ENCODE measurements at regions of chr19 and their contacts with region 1.

Region 1: DNA sequence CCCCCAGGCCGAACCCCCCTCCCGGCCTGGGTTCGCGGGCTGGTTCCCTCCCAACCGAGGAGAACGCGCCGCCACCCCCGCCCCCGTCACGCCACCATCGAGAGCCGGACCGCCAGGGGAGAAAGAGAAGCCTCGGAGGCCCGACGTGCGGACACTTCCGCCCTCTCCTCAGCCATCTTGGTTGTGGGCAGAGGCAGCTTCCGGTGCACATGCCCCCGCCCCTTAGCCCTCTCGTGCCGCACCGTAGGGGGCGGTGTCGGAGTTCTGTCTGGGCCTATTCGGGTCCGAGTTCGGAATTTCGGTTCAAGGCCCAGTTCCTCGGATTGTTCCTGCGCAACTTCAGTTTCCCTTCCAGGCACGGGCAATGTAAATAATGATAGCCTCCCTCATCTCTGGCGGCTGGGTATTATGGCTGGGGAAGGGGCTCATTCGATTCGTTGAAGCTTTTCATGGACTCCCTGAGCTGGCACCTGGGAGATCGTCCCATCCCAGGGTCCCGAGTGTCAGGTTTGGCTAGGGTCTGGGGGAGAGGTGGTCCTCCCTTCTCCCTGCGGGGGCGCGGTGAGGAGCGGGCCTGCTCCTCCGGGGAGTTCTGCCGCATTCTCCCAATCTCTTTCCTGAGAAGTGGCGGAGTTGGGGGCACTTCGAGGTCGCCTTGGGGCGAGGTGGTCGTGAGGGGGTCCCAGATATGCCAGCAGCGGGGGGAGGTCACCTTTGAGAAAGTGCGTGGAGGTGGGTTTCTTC is at the starts of genes IER2 and STX10:
- DNase-seq: peak; percentile 92
- H3K4me3 Mint-ChIP-seq: peak within 1 kb of the TSS; percentile 95
- H3K27ac Mint-ChIP-seq: peak within 1 kb of the TSS; percentile 94
- H3K4me1 Mint-ChIP-seq: peaks cover 29% of the 10 kb centered on the region
- H3K27me3 Mint-ChIP-seq: peaks cover 2% of the 10 kb centered on the region
- total RNA-seq, gene IER2: 173 and 175 TPM in 2 replicates
- total RNA-seq, gene STX10: 73.8 and 78.1 TPM in 2 replicates

Region 2: GRCh38 chr19:12789904-12790619 is 360.3 kb before region 1 on chr19:
- intact Hi-C with region 1: loop called (anchors 2 kb)
- DNase-seq: peak; percentile 94
- H3K4me3 Mint-ChIP-seq: peak overlapping the region; percentile 97
- H3K27ac Mint-ChIP-seq: peak overlapping the region; percentile 91
- H3K4me1 Mint-ChIP-seq: peaks cover 30% of the 10 kb centered on the region
- H3K27me3 Mint-ChIP-seq: no peaks in the 10 kb centered on the region

Region 3: DNA sequence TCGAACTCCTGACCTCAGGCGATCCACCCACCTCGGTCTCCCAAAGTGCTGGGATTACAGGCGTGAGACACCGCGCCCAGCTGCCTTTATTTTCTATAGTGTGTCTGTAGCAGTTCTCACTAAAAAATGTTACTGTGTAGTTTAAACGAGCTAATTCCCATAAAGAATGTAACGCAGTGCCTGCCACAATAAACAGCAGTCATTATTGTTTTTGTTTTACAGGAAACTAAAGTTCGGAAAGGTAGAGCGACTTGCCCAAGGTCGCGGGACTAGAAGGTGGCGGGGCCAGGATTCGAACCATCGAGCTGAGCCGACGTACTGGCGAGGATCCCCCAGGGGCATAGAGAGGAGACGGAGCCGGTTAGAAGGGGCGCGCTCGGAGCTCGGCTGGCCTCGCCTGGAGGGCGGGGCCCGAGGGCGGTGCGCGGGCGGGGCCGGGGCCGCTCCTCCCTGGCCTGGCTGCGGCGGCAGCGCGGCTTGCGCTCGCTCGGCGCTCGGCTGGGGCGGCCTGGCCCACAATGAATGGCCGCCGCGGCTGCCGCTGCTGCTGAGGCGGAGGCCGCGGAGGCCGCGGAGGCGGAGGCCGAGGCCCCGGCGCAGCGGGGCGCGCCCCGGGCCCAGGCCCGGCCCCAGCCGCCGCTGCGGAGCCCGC is 32.5 kb before region 1 on chr19 and contains the start of gene NACC1:
- intact Hi-C with region 1: loop called (anchors 1 kb)
- DNase-seq: peak; percentile 89
- H3K4me3 Mint-ChIP-seq: peak within 1 kb of the TSS; percentile 96
- H3K27ac Mint-ChIP-seq: peak within 1 kb of the TSS; percentile 97
- H3K4me1 Mint-ChIP-seq: peaks cover 51% of the 10 kb centered on the region
- H3K27me3 Mint-ChIP-seq: no peaks in the 10 kb centered on the region
- total RNA-seq, gene NACC1: 124 TPM in 2 replicates

Region 4: GRCh38 chr19:13162518-13163314 is 12.4 kb after region 1 on chr19:
- intact Hi-C with region 1: loop called (anchors 1 kb)
- DNase-seq: peak; percentile 90
- H3K4me3 Mint-ChIP-seq: peak overlapping the region; percentile 82
- H3K27ac Mint-ChIP-seq: peak overlapping the region; percentile 94
- H3K4me1 Mint-ChIP-seq: peaks cover 51% of the 10 kb centered on the region
- H3K27me3 Mint-ChIP-seq: no peaks in the 10 kb centered on the region

Region 5: DNA sequence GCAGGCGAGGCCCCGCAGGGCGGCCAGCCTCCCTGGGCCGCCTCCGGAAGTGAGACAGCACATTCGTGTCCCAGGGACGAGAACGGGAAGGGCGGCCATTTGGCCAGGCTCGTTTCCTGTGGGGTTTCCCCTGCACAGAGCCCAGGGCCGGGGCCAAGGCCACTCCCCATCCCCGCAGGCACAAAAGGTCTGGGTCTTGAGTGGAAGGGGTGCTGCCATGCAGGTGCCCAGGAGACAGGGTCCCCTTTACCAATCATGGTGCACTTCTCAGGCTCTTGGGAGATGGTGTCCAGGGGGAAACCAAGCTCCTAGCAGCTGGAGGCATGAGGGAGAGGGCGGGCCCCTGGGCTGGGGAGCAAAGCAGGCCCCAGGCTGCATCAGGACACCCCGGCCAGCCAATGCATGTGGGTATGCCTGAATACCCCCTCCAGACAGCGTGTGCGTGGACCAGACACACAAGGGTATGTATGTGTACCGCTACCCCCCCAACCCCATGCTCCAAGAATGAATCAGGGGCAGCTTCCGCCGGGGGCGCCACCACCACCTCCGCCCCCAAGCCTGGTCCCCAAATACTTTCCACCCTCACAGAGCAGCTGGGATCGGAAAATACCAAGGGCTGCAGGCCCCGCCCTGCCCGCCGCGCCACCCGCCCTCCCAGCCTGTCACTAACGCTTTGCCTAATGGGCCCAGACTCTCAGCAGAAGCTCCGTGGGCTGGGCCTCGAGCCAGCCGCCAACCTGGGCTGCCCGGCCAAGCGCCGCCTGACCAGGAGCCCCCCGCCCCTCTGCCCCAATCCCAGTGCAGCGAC is 689.0 kb after region 1 on chr19:
- intact Hi-C with region 1: loop called (anchors 5 kb)
- DNase-seq: peak; percentile 79
- H3K4me3 Mint-ChIP-seq: peak overlapping the region; percentile 93
- H3K27ac Mint-ChIP-seq: peak overlapping the region; percentile 99
- H3K4me1 Mint-ChIP-seq: peaks cover 36% of the 10 kb centered on the region
- H3K27me3 Mint-ChIP-seq: no peaks in the 10 kb centered on the region

Region 6: GRCh38 chr19:14081325-14082093 is 931.1 kb after region 1 on chr19:
- intact Hi-C with region 1: loop called (anchors 1 kb)
- DNase-seq: peak; percentile 99
- H3K4me3 Mint-ChIP-seq: peak overlapping the region; percentile 96
- H3K27ac Mint-ChIP-seq: peak overlapping the region; percentile 97
- H3K4me1 Mint-ChIP-seq: peaks cover 8% of the 10 kb centered on the region
- H3K27me3 Mint-ChIP-seq: no peaks in the 10 kb centered on the region

Measured in activated T-helper 1 cell treated with anti-CD3 and anti-CD28 coated beads, Interleukin-12 subunit alpha, Interleukin-12 subunit beta, Interleukin-2, Interleukin-4 antibody, amounts not matched to agents 30 ng/mL and 10 ng/mL and 1 ng/mL, durations not matched to agents 14 hours and 24 hours and 36 hours (primary cell).